Ascending aorta (tissue), 2 donors: ENCODE measurements at regions of chr17 and their contacts with region 1.

Region 1: DNA sequence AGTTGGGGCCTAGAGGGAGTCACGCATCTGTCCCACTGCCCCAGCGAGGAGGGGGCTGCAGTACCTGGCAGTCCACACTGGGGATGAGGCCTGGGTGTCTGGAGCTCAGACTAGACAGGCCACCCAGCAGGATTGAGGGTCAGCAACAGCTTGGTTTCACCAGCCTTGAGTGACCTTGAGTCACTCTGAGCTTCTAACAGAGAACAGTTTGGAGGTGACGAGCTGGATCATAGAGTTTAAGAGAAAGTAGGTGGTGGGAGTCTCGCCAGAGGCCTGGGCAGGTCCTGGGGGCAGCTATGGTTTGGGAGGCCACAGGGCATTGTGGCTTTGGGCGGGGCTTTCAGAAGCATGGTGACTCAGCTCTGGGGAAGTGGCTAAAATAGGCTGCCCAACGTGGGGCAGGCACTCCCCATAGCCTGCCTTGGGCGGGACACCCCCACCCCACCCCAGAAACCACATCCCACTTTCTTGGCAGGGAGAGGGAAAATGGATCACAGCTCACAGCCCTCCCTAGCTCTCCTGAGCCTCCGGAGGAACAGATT is 20.5 kb downstream of the CDC42EP4 start:
- DNase-seq: peak; percentile 50 to 93
- H3K4me3 ChIP-seq: peak overlapping the region; percentile 36 to 42
- H3K27ac ChIP-seq: peak overlapping the region; percentile 96 to 99
- H3K4me1 ChIP-seq: peaks cover 34 to 82% of the 10 kb centered on the region in 2 donors
- H3K27me3 ChIP-seq: no peaks in the 10 kb centered on the region
- CTCF ChIP-seq: no peak

Region 2: GRCh38 chr17:73304971-73305812 is 13.9 kb after region 1 on chr17:
- intact Hi-C with region 1: loop called (anchors 1 kb)
- DNase-seq: peak in 1 of 2 donors; percentile 92
- H3K4me3 ChIP-seq: peak overlapping the region; percentile 46 to 60
- H3K27ac ChIP-seq: peak overlapping the region; percentile 99
- H3K4me1 ChIP-seq: peaks cover 29 to 76% of the 10 kb centered on the region in 2 donors
- H3K27me3 ChIP-seq: no peaks in the 10 kb centered on the region
- CTCF ChIP-seq: peak in 2 of 3 experiments; percentile 25 to 27

Region 3: DNA sequence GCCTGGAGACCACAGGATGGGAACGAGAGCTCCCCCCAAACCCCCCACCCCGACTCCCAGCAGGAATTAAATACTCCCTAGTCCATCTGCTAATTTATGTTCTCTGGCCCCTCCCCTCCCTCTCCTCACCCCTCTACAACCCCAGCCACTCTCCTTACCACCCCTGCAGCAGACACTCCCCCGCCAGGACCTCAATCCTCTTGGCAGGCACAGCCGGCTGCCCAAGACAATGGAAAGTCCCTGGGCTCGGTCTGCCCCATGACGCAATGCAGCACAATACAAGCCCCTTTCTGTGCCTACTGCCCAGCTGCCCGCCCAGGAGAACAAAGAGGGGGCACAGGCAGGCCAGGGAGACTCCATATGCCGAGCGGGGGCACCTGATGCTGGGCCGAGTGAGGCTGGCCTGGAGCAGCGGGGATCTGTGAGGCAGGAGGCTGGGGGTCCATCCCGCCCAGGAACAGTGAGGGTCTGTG is 50.8 kb after region 1 on chr17:
- intact Hi-C with region 1: loop called (anchors 5 kb)
- DNase-seq: peak; percentile 55 to 80
- H3K4me3 ChIP-seq: no peak overlapping the region
- H3K27ac ChIP-seq: peak overlapping the region; percentile 78 to 83
- H3K4me1 ChIP-seq: peaks cover 3 to 37% of the 10 kb centered on the region in 2 donors
- H3K27me3 ChIP-seq: no peaks in the 10 kb centered on the region
- CTCF ChIP-seq: no peak

Region 4: DNA sequence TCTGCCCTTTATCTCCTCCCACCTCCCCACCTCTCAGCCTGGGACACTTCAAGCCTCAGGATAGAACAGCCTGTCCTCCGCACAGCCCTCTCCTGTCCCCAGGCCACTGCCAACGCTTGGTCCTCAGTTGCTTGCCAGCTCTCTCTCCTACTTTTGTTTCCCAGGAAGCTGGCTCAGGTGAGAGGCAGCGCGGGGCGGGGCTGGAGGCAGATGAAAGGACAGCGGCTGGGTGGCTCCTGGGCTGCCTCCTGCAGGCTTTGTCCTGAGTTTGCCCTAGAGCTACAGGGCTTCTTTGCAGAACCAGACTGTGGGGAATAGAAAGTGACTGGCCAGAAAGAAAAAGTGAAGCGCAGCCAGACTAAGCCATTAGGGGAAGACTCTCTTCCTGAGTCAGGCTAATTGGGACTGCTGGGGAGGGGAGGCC is 68.7 kb after region 1 on chr17:
- intact Hi-C with region 1: no loop called
- DNase-seq: no peak
- H3K4me3 ChIP-seq: no peak overlapping the region
- H3K27ac ChIP-seq: no peak overlapping the region
- H3K4me1 ChIP-seq: no peaks in the 10 kb centered on the region
- H3K27me3 ChIP-seq: no peaks in the 10 kb centered on the region
- CTCF ChIP-seq: no peak

Region 5: GRCh38 chr17:73639932-73640331 is 348.6 kb after region 1 on chr17:
- intact Hi-C with region 1: loop called (anchors 5 kb)
- DNase-seq: no peak
- H3K4me3 ChIP-seq: no peak overlapping the region
- H3K27ac ChIP-seq: peak overlapping the region; percentile 63 to 70
- H3K4me1 ChIP-seq: peaks cover 11 to 28% of the 10 kb centered on the region in 2 donors
- H3K27me3 ChIP-seq: no peaks in the 10 kb centered on the region
- CTCF ChIP-seq: no peak